ENCODE measurements at regions of chr6 and their contacts with region 1.

Region 1: GRCh38 chr6:51968265-51968664 is 119.1 kb downstream of the PKHD1 start:
- DNase-seq: no peak
- H3K4me3 ChIP-seq: no peak overlapping the region
- H3K27ac ChIP-seq: no peak overlapping the region
- H3K4me1 ChIP-seq: no peaks in the 10 kb centered on the region
- H3K27me3 ChIP-seq: peaks cover 7% of the 10 kb centered on the region
- CTCF ChIP-seq: no peak

Region 2: DNA sequence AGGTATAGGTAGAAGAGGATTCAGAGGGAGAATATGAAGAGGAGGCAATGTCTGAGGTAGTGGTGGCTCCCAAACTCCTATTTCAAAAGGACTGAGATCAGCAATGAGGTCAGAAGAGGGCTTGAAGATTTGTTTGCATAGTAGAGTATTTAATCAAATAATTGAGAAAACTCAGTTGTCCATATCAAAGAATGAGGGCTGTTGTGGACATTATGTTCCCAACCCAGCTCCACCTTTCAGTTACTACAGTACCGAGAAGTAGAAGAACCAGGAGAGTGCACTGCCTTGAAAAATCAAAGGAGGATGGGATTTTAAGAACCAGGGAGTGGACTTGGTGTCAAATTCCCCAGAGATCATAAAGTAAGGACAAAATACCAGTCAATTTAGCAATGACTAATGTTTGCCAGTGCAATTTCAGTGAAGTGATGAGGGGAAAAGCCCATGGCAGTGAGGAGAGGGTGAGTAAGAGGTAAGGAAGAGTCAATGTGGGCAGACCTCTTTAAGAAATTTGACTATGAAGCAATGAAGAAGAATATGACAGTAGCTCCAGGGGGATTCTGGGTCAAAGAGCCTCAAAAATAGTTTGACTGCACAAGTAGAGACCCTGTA is 263.2 kb before region 1 on chr6:
- CTCF ChIA-PET with region 1: no interaction called
- POLR2A ChIA-PET with region 1: no interaction called
- intact Hi-C with region 1: no loop called
- DNase-seq: no peak
- H3K4me3 ChIP-seq: no peak overlapping the region
- H3K27ac ChIP-seq: no peak overlapping the region
- H3K4me1 ChIP-seq: no peaks in the 10 kb centered on the region
- H3K27me3 ChIP-seq: peaks cover 22% of the 10 kb centered on the region
- CTCF ChIP-seq: no peak

Region 3: GRCh38 chr6:51830666-51831065 is 137.6 kb before region 1 on chr6:
- CTCF ChIA-PET with region 1: no interaction called
- POLR2A ChIA-PET with region 1: no interaction called
- intact Hi-C with region 1: no loop called
- DNase-seq: no peak
- H3K4me3 ChIP-seq: no peak overlapping the region
- H3K27ac ChIP-seq: no peak overlapping the region
- H3K4me1 ChIP-seq: no peaks in the 10 kb centered on the region
- H3K27me3 ChIP-seq: peaks cover 8% of the 10 kb centered on the region
- CTCF ChIP-seq: no peak

Region 4: GRCh38 chr6:52020945-52021570 is 52.8 kb after region 1 on chr6:
- CTCF ChIA-PET with region 1: no interaction called
- POLR2A ChIA-PET with region 1: no interaction called
- intact Hi-C with region 1: loop called (anchors 5 kb)
- DNase-seq: peak; percentile 55
- H3K4me3 ChIP-seq: no peak overlapping the region
- H3K27ac ChIP-seq: no peak overlapping the region
- H3K4me1 ChIP-seq: no peaks in the 10 kb centered on the region
- H3K27me3 ChIP-seq: no peaks in the 10 kb centered on the region
- CTCF ChIP-seq: peak; percentile 80